ENCODE measurements at regions of chr17 and their contacts with region 1.

Region 1: GRCh38 chr17:74457146-74457819 is 9.2 kb upstream of the CD300A start:
- DNase-seq: peak; percentile 71
- ATAC-seq: no peak
- H3K4me3 ChIP-seq: peak overlapping the region in 1 of 3 experiments; percentile 37; a peak in 2 of 6 replicates
- H3K27ac ChIP-seq: no peak overlapping the region
- H3K4me1 ChIP-seq: peaks cover 34% of the 10 kb centered on the region
- H3K27me3 ChIP-seq: peaks cover 3 to 35% of the 10 kb centered on the region in 2 experiments; a peak in 4 of 5 replicates
- CTCF ChIP-seq: peak; percentile 99
- EP300 ChIP-seq: 0 out of 4 replicates have a peak, but pooled peaks of 1 of the 2 experiments have one; percentile 15
- POLR2A ChIP-seq: no peak
- RAD21 ChIP-seq: peak; percentile 99

Region 2: GRCh38 chr17:74203439-74204240 is 253.6 kb before region 1 on chr17 and contains the start of gene RPL38:
- CTCF ChIA-PET with region 1: no interaction called
- POLR2A ChIA-PET with region 1: no interaction called
- in situ Hi-C with region 1: no loop called
- intact Hi-C with region 1: loop called (anchors 10 kb)
- DNase-seq: peak; percentile 98
- ATAC-seq: peak; percentile 78
- H3K4me3 ChIP-seq: peak within 1 kb of the TSS; percentile 92 to 99 (median 97)
- H3K27ac ChIP-seq: peak within 1 kb of the TSS; percentile 78
- H3K4me1 ChIP-seq: peaks cover 28% of the 10 kb centered on the region
- H3K27me3 ChIP-seq: peaks cover 18 to 48% of the 10 kb centered on the region in 2 experiments
- CTCF ChIP-seq: peak; percentile 99
- EP300 ChIP-seq: peak in 1 of 2 experiments; percentile 59; a peak in 2 of 4 replicates
- POLR2A ChIP-seq: peak; percentile 98 to 99
- RAD21 ChIP-seq: peak; percentile 50
- total RNA-seq, gene RPL38: 2,370 and 2,621 TPM in 2 replicates

Region 3: DNA sequence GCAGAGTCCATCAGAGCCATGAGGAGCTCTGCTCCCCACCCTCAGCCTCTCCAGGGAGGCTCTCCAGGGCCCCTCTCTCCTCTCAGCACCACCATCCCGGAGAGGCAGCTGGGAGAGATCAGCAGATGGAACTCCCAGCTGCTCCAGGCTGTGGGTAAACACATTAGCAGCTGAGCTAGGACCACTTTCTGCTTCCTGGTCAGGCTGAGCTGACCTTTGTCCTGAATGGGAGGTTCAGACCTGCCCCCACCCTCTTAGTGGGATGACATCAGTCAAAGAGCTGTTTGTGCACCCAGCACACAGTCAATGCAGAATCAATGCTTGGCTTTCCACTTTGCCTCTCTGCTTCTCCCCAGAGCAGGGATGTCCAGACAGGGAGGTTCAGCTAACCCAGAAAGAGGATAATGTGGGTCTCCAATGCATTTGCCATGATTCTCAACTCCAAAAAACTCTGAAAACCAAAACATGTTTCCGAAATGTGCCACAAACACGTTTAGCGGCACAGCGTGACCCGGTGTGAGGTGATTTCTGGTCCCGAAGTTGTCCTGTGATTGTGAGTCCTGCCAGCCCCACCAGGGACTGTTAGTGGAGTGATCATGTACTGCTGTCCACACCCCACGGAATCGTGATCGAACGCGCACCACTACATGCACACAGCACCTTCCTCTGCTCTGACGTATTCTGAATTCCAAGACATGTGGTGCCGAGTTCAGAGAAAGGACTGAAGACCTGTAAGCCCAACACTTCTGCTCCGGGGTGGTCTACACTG is 83.3 kb before region 1 on chr17:
- CTCF ChIA-PET with region 1: interaction called, 141 read pairs
- POLR2A ChIA-PET with region 1: interaction called, 29 read pairs
- in situ Hi-C with region 1: loop called (anchors 5 kb)
- intact Hi-C with region 1: loop called (anchors 1 kb)
- DNase-seq: peak; percentile 95
- ATAC-seq: peak; percentile 97
- H3K4me3 ChIP-seq: peak overlapping the region in 1 of 3 experiments; percentile 24; a peak in 2 of 6 replicates
- H3K27ac ChIP-seq: no peak overlapping the region
- H3K4me1 ChIP-seq: peaks cover 21% of the 10 kb centered on the region
- H3K27me3 ChIP-seq: peaks cover 1 to 31% of the 10 kb centered on the region in 2 experiments; a peak in 4 of 5 replicates
- CTCF ChIP-seq: peak; percentile 42
- EP300 ChIP-seq: peak; percentile 66 to 69
- POLR2A ChIP-seq: no peak
- RAD21 ChIP-seq: peak; percentile 55; the same call in 1 of the 2 replicates

Region 4: GRCh38 chr17:74408262-74408661 is 49.0 kb before region 1 on chr17:
- CTCF ChIA-PET with region 1: interaction called, 43 read pairs
- POLR2A ChIA-PET with region 1: interaction called, 9 read pairs
- in situ Hi-C with region 1: no loop called
- intact Hi-C with region 1: loop called (anchors 1 kb)
- DNase-seq: peak; percentile 71
- ATAC-seq: peak; percentile 83
- H3K4me3 ChIP-seq: no peak overlapping the region
- H3K27ac ChIP-seq: no peak overlapping the region
- H3K4me1 ChIP-seq: peaks cover 36% of the 10 kb centered on the region
- H3K27me3 ChIP-seq: peaks cover 7 to 28% of the 10 kb centered on the region in 2 experiments; a peak in 4 of 5 replicates
- CTCF ChIP-seq: peak; percentile 76
- EP300 ChIP-seq: no peak
- POLR2A ChIP-seq: no peak
- RAD21 ChIP-seq: peak; percentile 57

Region 5: DNA sequence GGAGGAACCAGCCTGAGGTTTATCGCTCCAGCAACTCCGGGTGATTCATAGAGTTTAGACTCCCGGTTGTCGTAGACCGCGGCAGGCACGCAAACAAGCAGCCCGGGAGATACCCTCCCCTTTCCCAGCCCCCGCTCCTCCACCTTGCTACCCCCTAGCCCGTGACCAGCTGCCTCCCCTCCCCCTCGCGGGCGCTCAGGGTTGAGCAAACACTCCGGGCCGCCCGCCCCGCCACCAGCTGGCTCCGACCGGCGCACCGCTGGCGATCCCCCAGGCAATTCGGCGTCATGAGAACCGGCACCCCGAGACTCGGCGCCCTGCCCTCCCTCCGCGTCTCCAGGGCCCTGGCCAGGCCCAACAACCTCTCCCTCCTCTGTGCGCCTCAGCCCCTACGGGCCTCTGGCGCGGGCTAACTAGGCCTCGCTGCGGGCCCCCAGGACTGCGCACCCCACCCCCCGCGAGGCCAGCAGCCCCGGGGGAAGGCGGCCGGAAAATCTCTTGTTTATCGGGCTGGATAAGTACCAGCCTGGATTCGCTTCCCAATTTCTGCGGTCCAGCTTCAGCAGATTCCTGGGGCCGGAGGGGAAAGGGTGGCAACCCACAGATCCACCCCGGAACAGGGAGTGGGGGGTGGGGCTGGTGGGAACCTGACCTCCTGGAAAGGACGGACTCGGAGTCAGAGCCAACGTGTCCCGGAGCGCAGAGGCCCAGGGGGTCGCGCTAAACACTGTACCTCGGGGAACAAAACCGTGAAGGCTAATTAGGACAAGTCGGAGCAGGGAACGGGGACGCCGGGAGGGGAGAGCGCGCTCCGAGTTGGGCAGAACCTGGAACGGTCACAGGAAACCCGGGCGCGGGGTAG is 26.3 kb before region 1 on chr17:
- CTCF ChIA-PET with region 1: interaction called, 34 read pairs
- POLR2A ChIA-PET with region 1: interaction called, 110 read pairs
- in situ Hi-C with region 1: no loop called
- intact Hi-C with region 1: loop called (anchors 2 kb)
- DNase-seq: peak; percentile 95
- ATAC-seq: peak; percentile 58
- H3K4me3 ChIP-seq: peak overlapping the region; percentile 82 to 94 (median 89)
- H3K27ac ChIP-seq: peak overlapping the region; percentile 98
- H3K4me1 ChIP-seq: peaks cover 69% of the 10 kb centered on the region
- H3K27me3 ChIP-seq: no peaks in the 10 kb centered on the region; a peak in 1 of 5 replicates
- CTCF ChIP-seq: peak; percentile 45
- EP300 ChIP-seq: peak in 1 of 2 experiments; percentile 55; a peak in 2 of 4 replicates
- POLR2A ChIP-seq: peak in 1 of 2 experiments; percentile 61; a peak in 3 of 4 replicates
- RAD21 ChIP-seq: peak; percentile 37

Region 6: GRCh38 chr17:74442670-74443515 is 14.4 kb before region 1 on chr17:
- CTCF ChIA-PET with region 1: interaction called, 34 read pairs
- POLR2A ChIA-PET with region 1: interaction called, 126 read pairs
- in situ Hi-C with region 1: no loop called
- intact Hi-C with region 1: loop called (anchors 1 kb)
- DNase-seq: peak; percentile 95
- ATAC-seq: peak; percentile 94
- H3K4me3 ChIP-seq: peak overlapping the region; percentile 33 to 72 (median 41)
- H3K27ac ChIP-seq: peak overlapping the region; percentile 96
- H3K4me1 ChIP-seq: peaks cover 37% of the 10 kb centered on the region
- H3K27me3 ChIP-seq: no peaks in the 10 kb centered on the region
- CTCF ChIP-seq: no peak; the same call in 1 of the 2 replicates
- EP300 ChIP-seq: peak; percentile 90 to 93
- POLR2A ChIP-seq: peak; percentile 92 to 97
- RAD21 ChIP-seq: peak; percentile 57

Region 7: DNA sequence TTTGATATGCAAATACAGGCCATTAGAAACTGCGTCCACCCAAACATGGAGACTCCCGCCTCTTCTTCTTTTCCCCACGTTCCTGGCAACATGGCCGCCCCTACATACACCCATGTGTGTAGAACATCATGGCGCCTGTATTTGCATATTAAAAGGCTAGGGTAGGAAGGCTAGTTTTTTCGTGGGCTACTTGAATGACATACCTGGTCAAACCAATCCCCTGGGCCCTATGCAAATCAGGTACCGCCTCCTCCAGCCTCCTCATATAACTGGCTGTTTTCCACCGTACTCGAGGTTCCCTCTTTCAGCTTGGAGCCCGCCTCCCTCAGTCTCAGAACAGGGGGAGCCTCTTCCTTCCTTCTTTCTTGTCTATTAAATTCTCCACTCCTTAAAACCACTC is 74.8 kb after region 1 on chr17:
- CTCF ChIA-PET with region 1: interaction called, 5 read pairs
- POLR2A ChIA-PET with region 1: no interaction called
- in situ Hi-C with region 1: no loop called
- intact Hi-C with region 1: loop called (anchors 5 kb)
- DNase-seq: no peak
- ATAC-seq: no peak
- H3K4me3 ChIP-seq: no peak overlapping the region
- H3K27ac ChIP-seq: no peak overlapping the region
- H3K4me1 ChIP-seq: no peaks in the 10 kb centered on the region
- H3K27me3 ChIP-seq: peaks cover 3 to 50% of the 10 kb centered on the region in 2 experiments; a peak in 4 of 5 replicates
- CTCF ChIP-seq: no peak
- EP300 ChIP-seq: no peak
- POLR2A ChIP-seq: no peak
- RAD21 ChIP-seq: no peak

Measured in HepG2 (cell line).